ENCODE measurements at regions of chr5 and their contacts with region 1.

Region 1: GRCh38 chr5:66987949-66988838 is 208.4 kb downstream of the CD180 start:
- DNase-seq: peak; percentile 61
- ATAC-seq: no peak
- H3K4me3 ChIP-seq: no peak overlapping the region
- H3K27ac ChIP-seq: no peak overlapping the region
- H3K4me1 ChIP-seq: peaks cover 2% of the 10 kb centered on the region
- H3K27me3 ChIP-seq: no peaks in the 10 kb centered on the region
- CTCF ChIP-seq: peak; percentile 82

Region 2: DNA sequence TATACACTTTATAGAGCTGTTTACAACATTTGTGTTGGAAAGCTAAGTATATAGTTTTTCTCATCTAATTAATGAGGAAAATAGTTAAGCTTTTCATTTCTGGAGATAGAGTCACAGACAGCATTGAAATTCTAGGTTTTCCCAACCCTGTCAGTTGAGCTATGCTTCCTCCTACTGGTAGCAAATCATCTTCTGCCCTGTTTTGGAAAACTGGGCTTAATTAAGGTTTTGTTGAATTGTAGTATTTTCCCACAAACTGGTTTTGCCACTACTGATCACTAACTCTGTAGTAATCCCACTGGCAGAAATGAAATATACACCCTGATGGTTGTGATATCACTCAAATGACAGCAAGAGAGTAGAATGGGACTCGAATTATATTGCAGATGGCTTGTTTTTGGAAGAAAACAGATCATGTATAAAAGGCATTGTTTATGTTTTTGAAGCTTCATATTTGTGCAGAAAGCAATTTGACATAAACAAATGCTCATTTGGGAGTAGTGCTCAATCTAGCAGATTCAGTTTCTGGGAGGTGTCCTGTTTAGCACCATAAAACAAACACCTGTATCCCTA is 161.8 kb after region 1 on chr5:
- CTCF ChIA-PET with region 1: no interaction called
- POLR2A ChIA-PET with region 1: no interaction called
- intact Hi-C with region 1: loop called (anchors 2 kb)
- DNase-seq: peak; percentile 58
- ATAC-seq: no peak
- H3K4me3 ChIP-seq: no peak overlapping the region
- H3K27ac ChIP-seq: no peak overlapping the region
- H3K4me1 ChIP-seq: no peaks in the 10 kb centered on the region
- H3K27me3 ChIP-seq: no peaks in the 10 kb centered on the region
- CTCF ChIP-seq: peak; percentile 71